ENCODE measurements at regions of chr7 and their contacts with region 1.

Region 1: GRCh38 chr7:31122649-31123058 is 70.5 kb downstream of the ADCYAP1R1 start:
- DNase-seq: no peak
- ATAC-seq: peak; percentile 72

Region 2: DNA sequence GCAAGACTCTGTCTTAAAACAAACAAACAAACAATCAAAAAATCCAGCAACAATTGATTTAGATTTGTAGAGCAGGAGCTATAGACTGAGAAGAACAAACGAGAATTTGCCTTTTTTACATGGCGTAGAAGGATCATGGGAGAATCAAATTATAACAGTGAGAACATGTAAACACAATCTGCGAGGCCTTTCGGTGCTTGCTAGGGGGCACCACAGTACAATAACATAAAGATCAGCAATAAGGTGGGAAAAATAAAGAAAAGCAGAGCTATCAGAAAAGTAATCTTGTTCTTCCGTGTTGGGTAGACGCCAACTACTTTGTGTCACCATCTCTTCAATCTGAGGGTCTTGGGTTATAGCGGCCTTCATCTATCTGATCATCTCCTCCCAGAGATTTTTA is 726.3 kb before region 1 on chr7:
- intact Hi-C with region 1: no loop called
- DNase-seq: no peak
- ATAC-seq: no peak

Region 3: GRCh38 chr7:30800785-30801252 is 321.8 kb before region 1 on chr7:
- intact Hi-C with region 1: loop called (anchors 2 kb)
- DNase-seq: no peak
- ATAC-seq: peak; percentile 70

Region 4: DNA sequence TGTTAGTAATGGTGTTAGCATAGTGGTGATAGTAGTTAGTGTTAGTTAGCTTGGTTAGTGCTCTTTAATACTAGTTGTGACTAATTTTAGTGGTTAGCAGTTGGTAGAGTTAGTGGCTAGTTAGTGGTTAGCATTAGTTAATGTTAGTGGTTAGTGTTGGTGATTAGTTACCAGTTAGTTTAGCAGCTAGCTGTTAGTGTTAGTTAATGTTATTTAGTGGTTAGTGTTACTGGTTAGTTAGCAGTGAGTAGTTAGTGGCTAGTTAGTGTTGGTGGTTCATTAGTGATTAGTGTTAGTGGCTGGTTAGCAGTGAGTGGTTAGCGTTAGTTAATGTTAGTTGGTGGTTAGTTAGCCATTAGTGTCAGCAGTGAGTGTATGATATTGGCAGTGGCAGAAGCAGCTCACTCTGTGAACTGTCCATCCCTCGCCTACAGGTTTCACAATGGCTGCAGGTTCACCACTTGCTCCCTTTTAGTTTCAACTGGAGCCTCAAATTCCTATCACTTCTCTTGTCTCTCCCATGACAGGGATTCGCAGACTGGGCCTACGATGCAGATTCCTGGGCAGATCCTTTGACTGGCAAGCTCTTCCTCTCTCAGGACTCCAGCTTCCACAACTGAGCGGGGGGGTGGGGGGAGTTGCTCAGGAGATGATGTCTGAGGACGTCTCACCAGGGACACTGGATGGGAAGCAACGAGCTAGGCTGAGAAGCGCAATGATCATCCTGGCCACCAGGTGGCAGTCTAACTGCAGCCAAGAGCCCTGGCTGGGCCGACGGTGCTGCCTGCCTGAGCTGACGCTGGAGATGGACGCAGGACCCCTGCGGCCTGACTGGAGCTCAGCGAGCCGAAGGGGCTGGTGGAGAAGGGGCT is 139.4 kb before region 1 on chr7:
- intact Hi-C with region 1: loop called (anchors 1 kb)
- DNase-seq: peak; percentile 91
- ATAC-seq: peak; percentile 80

Region 5: DNA sequence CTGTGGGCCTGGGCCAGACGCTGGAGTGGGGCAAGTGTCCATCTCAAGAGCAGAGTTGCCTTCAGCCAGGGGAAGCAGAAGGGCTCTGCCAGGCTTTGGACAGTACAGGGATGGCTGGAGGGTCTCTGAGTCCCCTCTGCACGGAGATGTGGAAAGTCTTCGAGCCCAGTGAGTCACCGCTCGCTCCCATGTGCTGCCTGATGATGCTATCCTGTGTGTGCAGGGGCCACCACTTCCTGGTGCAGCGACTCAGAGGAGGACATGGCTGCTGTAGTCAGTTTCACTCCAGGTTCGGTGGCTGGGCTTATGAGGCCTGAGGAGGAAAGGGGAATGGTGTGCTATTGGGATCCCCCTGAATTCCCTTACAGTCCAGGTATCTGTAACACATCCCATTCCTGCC is 64.5 kb before region 1 on chr7:
- intact Hi-C with region 1: loop called (anchors 5 kb)
- DNase-seq: peak; percentile 22
- ATAC-seq: no peak

Region 6: DNA sequence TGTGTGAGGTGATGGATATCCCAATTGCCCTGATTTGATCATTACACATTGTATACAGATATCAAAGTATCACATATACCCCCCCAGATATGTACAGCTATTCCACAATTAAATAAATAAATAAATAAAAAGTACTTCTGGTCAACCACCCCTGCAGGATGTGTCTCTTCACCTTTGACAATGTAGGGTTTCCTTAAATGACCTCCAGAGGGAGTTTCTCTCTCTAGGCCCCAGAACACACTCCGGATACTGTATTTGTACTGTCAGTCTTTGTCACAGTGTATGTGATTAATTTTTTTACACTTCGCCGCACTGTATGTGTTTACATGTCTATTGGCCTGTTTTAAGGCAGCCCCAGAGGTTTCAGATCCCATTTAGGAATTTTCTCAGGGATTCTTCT is 53.0 kb after region 1 on chr7:
- intact Hi-C with region 1: no loop called
- DNase-seq: no peak
- ATAC-seq: no peak

Measured in Right ventricle myocardium inferior (tissue), 1 donor.